ENCODE measurements at regions of chr10 and their contacts with region 1.

Region 1: DNA sequence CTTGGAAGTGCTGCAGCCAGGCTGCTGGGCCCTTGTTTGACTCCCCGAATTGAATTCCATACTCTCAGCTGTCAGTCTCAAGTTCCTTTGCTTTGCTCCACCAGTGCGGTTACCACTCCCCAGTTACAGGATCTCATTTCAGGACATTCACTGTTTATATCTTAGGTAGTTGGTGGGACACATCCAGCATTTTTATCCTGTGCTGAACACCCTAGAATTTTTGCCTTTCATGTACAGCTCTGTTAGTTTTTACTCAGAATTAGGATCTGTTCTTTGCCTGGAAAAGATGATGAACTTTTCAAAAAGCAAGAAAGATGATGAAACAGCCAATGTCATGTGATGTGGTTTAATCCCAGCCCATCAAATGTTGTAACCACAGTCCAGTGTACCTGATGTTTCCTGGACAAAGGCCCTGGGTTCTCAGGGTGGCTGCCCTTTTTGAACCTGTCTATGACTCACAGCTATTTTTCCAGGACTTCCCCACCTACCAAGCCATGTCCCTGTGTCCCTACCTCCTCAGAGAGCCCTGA is 149.7 kb downstream of the NOC3L start:
- DNase-seq: peak in 2 of 5 donors; percentile 19 to 53
- H3K4me3 ChIP-seq: no peak overlapping the region
- H3K27ac ChIP-seq: no peak overlapping the region
- H3K4me1 ChIP-seq: peaks cover 14% of the 10 kb centered on the region
- H3K27me3 ChIP-seq: no peaks in the 10 kb centered on the region
- CTCF ChIP-seq: no peak
- EP300 ChIP-seq: no peak
- POLR2A ChIP-seq: no peak

Region 2: DNA sequence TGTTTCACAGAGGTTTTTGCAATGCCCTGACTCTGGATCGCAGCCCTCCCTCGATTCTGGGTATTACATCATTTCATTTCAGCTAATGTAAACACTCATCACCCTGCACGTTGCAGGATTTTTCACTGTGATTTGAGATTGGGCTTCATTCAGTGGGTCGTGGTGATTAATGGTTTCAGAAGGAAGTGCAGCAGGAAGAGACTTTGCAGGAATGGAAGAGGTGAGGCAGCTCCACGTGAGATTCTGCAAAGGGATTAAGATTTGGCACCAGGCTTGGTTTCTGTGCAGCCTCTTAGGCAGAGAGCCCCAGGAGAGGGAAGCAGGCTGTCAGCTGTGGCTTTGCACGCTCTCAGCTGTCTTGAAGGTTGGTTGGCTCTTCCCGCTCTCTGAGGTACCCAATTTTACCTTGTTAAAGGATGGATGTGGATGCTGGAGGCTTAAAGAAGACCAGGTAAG is 124.1 kb before region 1 on chr10:
- intact Hi-C with region 1: loop called in 1 of 4 experiments (anchors 5 kb)
- DNase-seq: peak in 2 of 5 donors; percentile 20 to 27
- H3K4me3 ChIP-seq: no peak overlapping the region
- H3K27ac ChIP-seq: no peak overlapping the region
- H3K4me1 ChIP-seq: peaks cover 8% of the 10 kb centered on the region
- H3K27me3 ChIP-seq: no peaks in the 10 kb centered on the region
- CTCF ChIP-seq: no peak
- EP300 ChIP-seq: no peak
- POLR2A ChIP-seq: no peak

Region 3: DNA sequence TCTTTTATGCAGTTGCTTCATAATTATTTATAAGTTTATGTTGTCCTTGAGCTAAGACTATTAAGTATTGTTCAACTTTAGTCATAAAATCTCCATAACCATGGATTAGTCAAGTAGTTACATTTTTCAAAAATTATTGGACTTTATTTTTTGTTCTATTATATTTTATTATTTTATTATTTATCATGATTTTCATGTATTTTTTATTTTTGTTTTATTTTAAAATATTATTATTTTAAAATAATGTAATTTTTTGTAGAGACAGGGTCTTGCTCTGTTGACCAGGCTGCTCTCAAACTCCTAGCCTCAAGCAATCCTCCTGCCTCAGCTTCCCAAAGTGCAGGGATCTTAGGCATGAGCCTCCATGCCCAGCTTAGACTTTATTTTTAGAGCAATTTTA is 47.4 kb after region 1 on chr10:
- intact Hi-C with region 1: no loop called
- DNase-seq: no peak
- H3K4me3 ChIP-seq: no peak overlapping the region
- H3K27ac ChIP-seq: no peak overlapping the region
- H3K4me1 ChIP-seq: peaks cover 3% of the 10 kb centered on the region
- H3K27me3 ChIP-seq: no peaks in the 10 kb centered on the region
- CTCF ChIP-seq: no peak
- EP300 ChIP-seq: no peak
- POLR2A ChIP-seq: no peak